Upper lobe of right lung (tissue), 1 donor: ENCODE measurements at regions of chr11 and their contacts with region 1.

Region 1: GRCh38 chr11:111446404-111447111 is 65.6 kb downstream of the BTG4 start:
- DNase-seq: peak; percentile 80
- ATAC-seq: peak; percentile 98
- H3K4me3 ChIP-seq: no peak overlapping the region
- H3K27ac ChIP-seq: no peak overlapping the region
- H3K4me1 ChIP-seq: peaks cover 8% of the 10 kb centered on the region
- H3K27me3 ChIP-seq: no peaks in the 10 kb centered on the region
- CTCF ChIP-seq: peak; percentile 79

Region 2: GRCh38 chr11:111283945-111284481 is 162.5 kb before region 1 on chr11:
- intact Hi-C with region 1: loop called (anchors 5 kb)
- DNase-seq: no peak
- ATAC-seq: peak; percentile 60
- H3K4me3 ChIP-seq: no peak overlapping the region
- H3K27ac ChIP-seq: no peak overlapping the region
- H3K4me1 ChIP-seq: no peaks in the 10 kb centered on the region
- H3K27me3 ChIP-seq: no peaks in the 10 kb centered on the region
- CTCF ChIP-seq: no peak

Region 3: DNA sequence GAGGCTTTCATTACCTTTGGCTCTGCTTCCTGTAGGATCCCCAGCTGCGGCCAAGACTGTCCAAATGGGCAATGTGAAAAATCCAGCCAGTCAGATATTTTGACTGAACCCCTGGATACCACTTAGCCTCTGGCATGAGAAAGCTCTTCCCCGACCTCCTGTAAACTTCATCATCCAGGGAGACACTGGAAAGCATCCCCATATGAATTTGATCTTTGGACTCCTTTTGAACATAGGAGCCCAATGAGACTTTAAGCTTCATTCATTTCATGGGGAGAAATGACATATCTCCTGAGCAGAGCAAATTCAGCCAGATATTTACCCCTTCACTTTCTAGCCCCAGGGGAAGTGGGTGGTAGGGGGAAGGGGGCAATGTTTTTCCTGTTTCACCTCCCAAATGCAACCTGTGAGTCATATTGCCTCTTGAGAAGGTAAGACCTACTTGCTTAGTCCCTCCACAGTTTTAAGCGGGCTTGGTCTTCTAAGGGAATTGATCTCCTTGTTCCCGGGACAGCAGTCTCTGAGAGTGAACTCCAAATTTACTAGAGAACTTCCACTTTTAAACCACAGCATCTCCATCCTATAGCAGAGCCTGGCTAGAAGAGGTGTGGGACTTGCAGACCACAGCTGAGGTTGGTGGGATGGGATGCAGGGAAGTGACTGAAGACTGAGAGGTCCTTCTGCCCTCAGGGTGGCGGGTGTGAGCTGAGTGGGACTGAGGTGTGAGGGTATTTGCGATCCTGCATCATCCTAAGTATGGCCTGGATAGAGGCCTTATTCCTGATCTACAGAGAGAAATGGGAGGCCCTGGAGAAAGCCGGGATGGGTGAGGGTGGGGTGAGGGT is 47.1 kb before region 1 on chr11:
- intact Hi-C with region 1: no loop called
- DNase-seq: no peak
- ATAC-seq: no peak
- H3K4me3 ChIP-seq: no peak overlapping the region
- H3K27ac ChIP-seq: no peak overlapping the region
- H3K4me1 ChIP-seq: no peaks in the 10 kb centered on the region
- H3K27me3 ChIP-seq: no peaks in the 10 kb centered on the region
- CTCF ChIP-seq: no peak